BJ (cell line): ENCODE measurements at regions of chr1 and their contacts with region 1.

Region 1: GRCh38 chr1:155038602-155039307 is 5.1 kb downstream of the DCST1 start:
- DNase-seq: no peak
- H3K4me3 ChIP-seq: no peak overlapping the region
- H3K27me3 ChIP-seq: peaks cover 6% of the 10 kb centered on the region
- CTCF ChIP-seq: no peak

Region 2: GRCh38 chr1:155050560-155051341 is 12.0 kb after region 1 on chr1 and contains the start of gene ADAM15:
- CTCF ChIA-PET with region 1: interaction called, 168 read pairs
- POLR2A ChIA-PET with region 1: no interaction called
- DNase-seq: no peak
- H3K4me3 ChIP-seq: peak within 1 kb of the TSS; percentile 68
- H3K27me3 ChIP-seq: no peaks in the 10 kb centered on the region
- CTCF ChIP-seq: peak; percentile 87
- polyA plus RNA-seq, gene ADAM15: 55.1 and 88.8 TPM in 2 replicates